ENCODE measurements at regions of chr5 and their contacts with region 1.

Region 1: GRCh38 chr5:130549884-130550561 is 615.0 kb downstream of the HINT1 start:
- DNase-seq: no peak
- H3K4me3 ChIP-seq: no peak overlapping the region
- H3K4me3 Mint-ChIP-seq: no peak overlapping the region
- H3K27ac Mint-ChIP-seq: no peak overlapping the region
- H3K4me1 ChIP-seq: peaks cover 7% of the 10 kb centered on the region; the same call in 1 of the 2 replicates
- H3K4me1 Mint-ChIP-seq: peaks cover 5% of the 10 kb centered on the region
- H3K27me3 ChIP-seq: no peaks in the 10 kb centered on the region
- H3K27me3 Mint-ChIP-seq: no peaks in the 10 kb centered on the region
- CTCF ChIP-seq: no peak

Region 2: GRCh38 chr5:130109152-130109551 is 440.9 kb before region 1 on chr5:
- CTCF ChIA-PET with region 1: no interaction called
- POLR2A ChIA-PET with region 1: no interaction called
- intact Hi-C with region 1: loop called (anchors 1 kb)
- DNase-seq: peak in 1 of 2 experiments; percentile 16
- H3K4me3 ChIP-seq: no peak overlapping the region
- H3K4me3 Mint-ChIP-seq: no peak overlapping the region
- H3K27ac Mint-ChIP-seq: no peak overlapping the region
- H3K4me1 ChIP-seq: no peaks in the 10 kb centered on the region
- H3K4me1 Mint-ChIP-seq: no peaks in the 10 kb centered on the region
- H3K27me3 ChIP-seq: no peaks in the 10 kb centered on the region
- H3K27me3 Mint-ChIP-seq: no peaks in the 10 kb centered on the region
- CTCF ChIP-seq: peak; percentile 60 to 72

Region 3: DNA sequence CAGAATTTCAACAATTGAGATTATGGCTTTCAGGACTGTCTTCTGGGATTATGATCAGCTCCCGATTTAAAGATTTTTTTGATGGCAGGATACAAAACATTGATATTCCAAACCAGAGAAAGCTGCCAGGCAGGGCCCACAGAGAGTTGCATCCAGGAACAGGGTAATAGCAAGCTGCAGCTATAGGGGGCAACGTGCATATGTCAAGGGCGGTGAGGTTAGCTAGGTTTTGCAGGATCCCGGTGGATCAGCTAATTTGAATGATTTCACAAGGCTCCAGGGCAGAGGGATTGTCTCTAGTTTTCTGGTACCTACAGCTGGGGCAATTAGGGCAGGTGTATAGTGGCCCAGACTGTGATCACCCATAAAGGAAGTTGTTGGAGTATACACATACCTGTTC is 306.4 kb before region 1 on chr5:
- CTCF ChIA-PET with region 1: no interaction called
- POLR2A ChIA-PET with region 1: no interaction called
- intact Hi-C with region 1: loop called (anchors 1 kb)
- DNase-seq: peak in 1 of 2 experiments; percentile 5
- H3K4me3 ChIP-seq: no peak overlapping the region
- H3K4me3 Mint-ChIP-seq: no peak overlapping the region
- H3K27ac Mint-ChIP-seq: no peak overlapping the region
- H3K4me1 ChIP-seq: no peaks in the 10 kb centered on the region
- H3K4me1 Mint-ChIP-seq: no peaks in the 10 kb centered on the region
- H3K27me3 ChIP-seq: no peaks in the 10 kb centered on the region
- H3K27me3 Mint-ChIP-seq: no peaks in the 10 kb centered on the region
- CTCF ChIP-seq: no peak

Region 4: DNA sequence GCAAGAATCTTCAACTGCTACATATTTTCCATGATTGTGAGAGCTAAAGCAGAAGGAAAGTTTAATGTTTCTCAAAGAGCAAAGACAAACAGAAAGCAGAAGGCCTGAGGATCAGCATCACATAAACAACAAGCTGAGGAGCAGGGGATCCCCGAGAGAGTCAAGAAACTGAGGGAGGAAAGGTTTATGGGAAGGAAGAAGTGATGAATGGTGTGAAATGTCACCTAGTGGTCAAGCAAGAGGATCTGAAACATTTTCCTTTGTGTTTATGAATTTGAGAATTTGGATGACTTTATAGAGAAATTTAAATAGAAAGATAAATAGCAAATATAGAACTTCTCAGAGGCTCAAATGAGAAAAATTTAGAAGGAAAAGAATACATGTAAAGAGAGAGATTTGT is 163.9 kb before region 1 on chr5:
- CTCF ChIA-PET with region 1: no interaction called
- POLR2A ChIA-PET with region 1: no interaction called
- intact Hi-C with region 1: loop called (anchors 5 kb)
- DNase-seq: no peak
- H3K4me3 ChIP-seq: no peak overlapping the region
- H3K4me3 Mint-ChIP-seq: no peak overlapping the region
- H3K27ac Mint-ChIP-seq: no peak overlapping the region
- H3K4me1 ChIP-seq: no peaks in the 10 kb centered on the region; the same call in 1 of the 2 replicates
- H3K4me1 Mint-ChIP-seq: no peaks in the 10 kb centered on the region
- H3K27me3 ChIP-seq: no peaks in the 10 kb centered on the region
- H3K27me3 Mint-ChIP-seq: no peaks in the 10 kb centered on the region
- CTCF ChIP-seq: no peak

Region 5: GRCh38 chr5:131005963-131006684 is 456.1 kb after region 1 on chr5:
- CTCF ChIA-PET with region 1: no interaction called
- POLR2A ChIA-PET with region 1: no interaction called
- intact Hi-C with region 1: loop called (anchors 10 kb)
- DNase-seq: peak in 1 of 2 experiments; percentile 17
- H3K4me3 ChIP-seq: no peak overlapping the region
- H3K4me3 Mint-ChIP-seq: no peak overlapping the region
- H3K27ac Mint-ChIP-seq: no peak overlapping the region
- H3K4me1 ChIP-seq: no peaks in the 10 kb centered on the region
- H3K4me1 Mint-ChIP-seq: no peaks in the 10 kb centered on the region
- H3K27me3 ChIP-seq: no peaks in the 10 kb centered on the region
- H3K27me3 Mint-ChIP-seq: peaks cover 10% of the 10 kb centered on the region
- CTCF ChIP-seq: peak; percentile 27 to 32